Right cardiac atrium (tissue), 5 donors: ENCODE measurements at regions of chr1 and their contacts with region 1.

Region 1: GRCh38 chr1:45393718-45394302 is 53.6 kb upstream of the MUTYH start:
- DNase-seq: no peak
- ATAC-seq: peak; percentile 21 to 56
- H3K4me3 ChIP-seq: no peak overlapping the region
- H3K27ac ChIP-seq: no peak overlapping the region
- H3K4me1 ChIP-seq: peaks cover 5% of the 10 kb centered on the region
- H3K27me3 ChIP-seq: no peaks in the 10 kb centered on the region

Region 2: GRCh38 chr1:45442272-45442671 is 48.5 kb after region 1 on chr1:
- intact Hi-C with region 1: loop called in 1 of 4 experiments (anchors 10 kb)
- DNase-seq: no peak
- ATAC-seq: no peak
- H3K4me3 ChIP-seq: no peak overlapping the region
- H3K27ac ChIP-seq: no peak overlapping the region
- H3K4me1 ChIP-seq: no peaks in the 10 kb centered on the region
- H3K27me3 ChIP-seq: no peaks in the 10 kb centered on the region